ENCODE measurements at regions of chr3 and their contacts with region 1.

Region 1: GRCh38 chr3:112043603-112044201 is 9.2 kb downstream of the TMPRSS7 start:
- DNase-seq: peak; percentile 31
- ATAC-seq: peak; percentile 93 to 94

Region 2: DNA sequence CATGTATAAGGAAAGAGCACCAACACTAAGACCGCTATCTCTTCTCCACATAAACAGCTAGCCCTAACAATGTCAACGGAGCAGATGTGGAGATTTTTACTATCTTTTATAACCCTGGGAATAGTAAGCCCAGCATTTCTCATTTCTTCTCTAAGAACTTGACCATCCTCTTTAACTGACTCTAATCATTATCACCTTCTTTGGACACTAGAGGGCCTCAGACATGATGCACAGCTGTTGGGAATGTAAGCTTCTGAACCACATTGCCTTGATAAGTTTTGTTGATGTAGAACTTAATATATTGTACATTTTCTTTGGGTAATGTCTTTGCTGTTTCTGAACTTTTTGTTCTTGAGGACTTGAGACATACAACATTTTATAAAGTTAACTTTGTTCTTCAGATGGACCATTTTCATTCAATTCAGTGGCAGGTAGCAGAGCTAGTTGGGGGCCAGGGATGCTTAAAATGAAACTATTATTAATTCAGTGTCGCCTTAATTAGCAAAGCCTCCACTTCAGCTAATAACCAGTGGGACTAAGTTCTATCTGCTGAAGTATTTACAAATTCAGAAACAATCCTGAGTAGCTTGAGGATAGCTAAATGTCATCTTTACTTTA is 54.5 kb before region 1 on chr3:
- intact Hi-C with region 1: loop called in 1 of 2 experiments (anchors 5 kb)
- DNase-seq: no peak
- ATAC-seq: peak; percentile 70 to 80

Measured in left cardiac atrium (tissue), 4 donors.